Activated CD8-positive, alpha-beta T cell treated with anti-CD3 and anti-CD28 coated beads, Interleukin-2, amount 10 ng/mL, durations not matched to agents 7 days and 5 days (primary cell): ENCODE measurements at regions of chr2 and their contacts with region 1.

Region 1: GRCh38 chr2:9555297-9556141 is at the start of gene ADAM17:
- DNase-seq: peak; percentile 89
- ATAC-seq: peak; percentile 94
- H3K4me3 Mint-ChIP-seq: peak within 1 kb of the TSS; percentile 99
- H3K27ac Mint-ChIP-seq: peak within 1 kb of the TSS; percentile 98
- H3K4me1 Mint-ChIP-seq: peaks cover 61% of the 10 kb centered on the region
- H3K27me3 Mint-ChIP-seq: no peaks in the 10 kb centered on the region
- total RNA-seq, gene ADAM17: 20.7 to 25.0 TPM

Region 2: GRCh38 chr2:9474361-9474967 is 81.1 kb before region 1 on chr2 and contains the start of gene IAH1:
- CTCF ChIA-PET with region 1: interaction called, 12 read pairs
- POLR2A ChIA-PET with region 1: interaction called, 20 read pairs
- DNase-seq: peak; percentile 75
- ATAC-seq: peak; percentile 90
- H3K4me3 Mint-ChIP-seq: peak within 1 kb of the TSS; percentile 79
- H3K27ac Mint-ChIP-seq: peak within 1 kb of the TSS; percentile 86
- H3K4me1 Mint-ChIP-seq: peaks cover 41% of the 10 kb centered on the region
- H3K27me3 Mint-ChIP-seq: no peaks in the 10 kb centered on the region
- total RNA-seq, gene IAH1: 71.7 to 73.3 TPM

Region 3: DNA sequence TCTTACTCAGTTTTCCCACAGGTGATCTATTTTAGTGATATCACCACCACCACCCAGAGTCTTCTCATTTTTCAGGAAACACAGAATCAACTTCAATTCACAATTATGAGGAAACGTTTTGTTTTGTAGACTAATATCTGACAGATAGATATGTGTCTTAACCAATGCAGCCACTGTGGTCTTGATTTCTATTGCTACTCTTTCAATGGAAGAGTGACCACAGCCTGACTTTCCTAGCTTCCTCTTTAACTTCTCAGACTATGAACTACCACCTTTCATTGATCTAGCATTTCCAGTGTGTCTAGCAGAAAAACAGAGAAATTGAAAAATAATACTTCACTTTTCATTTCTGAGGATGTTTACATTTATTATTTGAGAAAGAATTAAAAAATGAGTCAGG is 20.3 kb before region 1 on chr2:
- CTCF ChIA-PET with region 1: interaction called, 11 read pairs
- POLR2A ChIA-PET with region 1: interaction called, 10 read pairs
- DNase-seq: no peak
- ATAC-seq: no peak
- H3K4me3 Mint-ChIP-seq: no peak overlapping the region
- H3K27ac Mint-ChIP-seq: no peak overlapping the region
- H3K4me1 Mint-ChIP-seq: peaks cover 20% of the 10 kb centered on the region
- H3K27me3 Mint-ChIP-seq: no peaks in the 10 kb centered on the region

Region 4: DNA sequence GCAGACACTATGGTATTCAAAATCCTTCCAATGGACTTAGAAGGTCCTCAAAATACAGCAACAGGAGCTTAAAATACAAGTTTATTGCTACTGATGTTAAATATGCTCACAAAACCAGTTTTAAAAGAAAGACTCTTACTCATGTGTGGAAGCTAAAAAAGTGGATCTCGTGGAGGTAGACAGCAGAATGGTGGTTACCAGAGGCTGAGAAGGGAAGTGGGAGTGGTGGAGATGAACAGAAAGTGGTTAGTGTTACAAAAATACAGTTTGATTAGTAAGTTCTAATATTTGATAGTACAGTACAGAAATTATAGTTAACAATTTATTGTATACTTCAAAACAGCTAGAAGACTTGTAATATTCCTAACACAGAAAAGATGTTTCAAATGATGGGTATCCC is 12.0 kb before region 1 on chr2:
- CTCF ChIA-PET with region 1: interaction called, 16 read pairs
- POLR2A ChIA-PET with region 1: interaction called, 11 read pairs
- DNase-seq: no peak
- ATAC-seq: peak; percentile 50
- H3K4me3 Mint-ChIP-seq: peak overlapping the region; percentile 24
- H3K27ac Mint-ChIP-seq: peak overlapping the region; percentile 40
- H3K4me1 Mint-ChIP-seq: peaks cover 43% of the 10 kb centered on the region
- H3K27me3 Mint-ChIP-seq: no peaks in the 10 kb centered on the region

Region 5: DNA sequence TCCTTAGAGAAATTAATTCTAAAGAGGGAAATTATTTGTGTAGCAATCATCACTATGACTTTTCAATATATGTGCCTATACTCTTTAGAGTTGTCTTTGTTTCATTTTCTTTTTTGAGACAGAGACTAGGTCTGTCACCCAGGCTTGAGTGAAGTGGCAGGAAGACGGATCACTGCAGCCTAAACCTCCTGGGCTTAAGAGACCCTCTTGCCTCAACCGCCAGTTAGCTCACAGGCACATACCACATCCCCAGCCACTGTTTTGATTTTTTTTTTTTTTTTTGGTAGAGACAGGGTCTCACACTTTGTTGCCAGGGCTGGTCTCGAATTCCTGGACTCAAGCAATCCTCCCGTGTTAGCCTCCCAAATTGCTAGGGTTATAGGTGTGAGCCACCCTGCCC is 62.9 kb after region 1 on chr2:
- CTCF ChIA-PET with region 1: interaction called, 4 read pairs
- POLR2A ChIA-PET with region 1: interaction called, 16 read pairs
- DNase-seq: peak; percentile 69
- ATAC-seq: peak; percentile 92
- H3K4me3 Mint-ChIP-seq: peak overlapping the region; percentile 60
- H3K27ac Mint-ChIP-seq: peak overlapping the region; percentile 89
- H3K4me1 Mint-ChIP-seq: peaks cover 83% of the 10 kb centered on the region
- H3K27me3 Mint-ChIP-seq: no peaks in the 10 kb centered on the region